MCF 10A (cell line): ENCODE measurements at regions of chr19 and their contacts with region 1.

Region 1: DNA sequence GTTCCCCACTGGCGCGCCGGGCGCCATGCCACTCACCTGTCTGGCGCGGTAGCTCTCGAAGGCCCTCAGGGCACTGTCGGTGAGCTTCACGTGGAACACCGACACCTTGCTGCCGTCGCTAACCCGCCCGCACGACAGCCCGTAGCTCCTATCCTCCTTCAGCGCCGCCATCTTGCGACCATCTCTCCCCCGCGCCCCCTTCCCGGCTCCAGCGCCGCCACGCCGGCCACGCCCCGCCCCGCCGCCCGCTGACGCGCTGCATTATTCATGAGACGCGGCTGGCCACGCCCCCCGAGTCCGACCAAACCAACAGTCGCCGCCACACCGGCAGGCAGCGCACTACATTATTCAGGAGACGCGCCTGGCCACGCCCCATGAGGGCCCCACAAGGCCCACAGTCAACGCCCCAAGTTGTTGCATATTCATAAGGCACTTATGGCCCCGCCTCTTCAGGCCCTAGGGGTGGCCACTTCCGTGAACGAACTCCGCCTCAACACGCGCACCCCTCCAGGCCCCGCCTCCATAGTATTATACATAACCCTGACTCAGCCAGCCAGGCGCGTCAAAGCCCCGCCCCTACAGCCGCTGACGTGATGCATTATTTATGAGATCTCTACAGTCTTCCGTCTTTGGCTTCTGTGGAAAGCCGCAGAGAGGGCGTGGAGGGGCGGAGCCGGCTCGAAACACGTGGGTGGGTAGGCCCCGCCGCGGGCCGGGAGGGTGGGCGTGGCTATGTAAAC is at the start of gene ELL:
- DNase-seq: peak; percentile 100
- H3K4me3 Mint-ChIP-seq: peak within 1 kb of the TSS; percentile 89
- H3K27ac Mint-ChIP-seq: peak within 1 kb of the TSS; percentile 83
- H3K4me1 Mint-ChIP-seq: peaks cover 15% of the 10 kb centered on the region
- H3K27me3 Mint-ChIP-seq: no peaks in the 10 kb centered on the region
- CTCF ChIP-seq: no peak
- total RNA-seq, gene ELL: 20.8 and 22.4 TPM in 2 replicates

Region 2: DNA sequence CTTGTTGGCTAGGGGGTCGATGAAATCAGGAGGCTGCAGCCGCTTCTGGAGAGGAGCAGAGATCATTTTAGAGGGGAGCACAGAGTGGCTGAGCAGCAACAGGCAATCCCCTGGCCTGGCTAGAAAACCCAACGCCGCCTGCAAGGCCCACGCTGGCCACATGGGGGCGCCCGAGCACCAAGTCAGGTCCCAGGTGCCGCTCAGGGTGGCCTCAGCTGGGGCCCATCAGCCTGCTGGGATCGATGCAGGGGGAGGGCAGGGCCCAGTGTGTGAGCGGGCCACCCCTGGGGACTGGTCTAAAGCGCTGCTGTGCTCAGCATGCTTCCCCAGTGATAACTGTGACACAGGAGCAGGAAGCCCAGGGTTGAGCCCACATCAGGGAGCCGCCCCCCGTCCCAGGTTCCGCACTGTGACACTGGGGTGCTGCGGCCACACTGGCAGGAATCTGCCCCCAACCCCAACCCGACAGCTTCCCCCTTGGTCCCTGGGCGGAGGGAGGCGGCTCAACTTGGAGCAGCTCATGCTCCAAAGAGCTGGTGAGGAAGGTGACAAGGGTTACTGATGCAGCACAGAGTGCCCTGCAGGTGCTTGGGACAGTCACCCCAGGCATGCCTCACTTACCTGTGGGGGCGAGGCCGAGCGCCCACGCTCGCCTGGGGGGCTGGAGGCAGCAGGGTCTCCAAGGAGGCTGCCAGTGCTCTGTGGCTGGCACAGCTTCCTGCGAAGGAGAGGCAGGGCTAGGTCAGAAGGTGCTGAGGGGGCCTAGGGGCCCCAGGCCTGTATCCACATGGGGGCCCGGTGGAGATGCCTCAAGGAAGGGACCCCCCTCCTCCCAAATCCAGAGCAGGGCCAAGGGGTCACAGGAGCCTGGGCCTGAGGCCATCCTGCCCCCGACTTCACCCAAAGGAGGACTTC is 70.9 kb before region 1 on chr19:
- CTCF ChIA-PET with region 1: interaction called, 13 read pairs
- POLR2A ChIA-PET with region 1: interaction called, 6 read pairs
- intact Hi-C with region 1: loop called (anchors 5 kb)
- DNase-seq: peak; percentile 78
- H3K4me3 Mint-ChIP-seq: no peak overlapping the region
- H3K27ac Mint-ChIP-seq: peak overlapping the region; percentile 14
- H3K4me1 Mint-ChIP-seq: peaks cover 9% of the 10 kb centered on the region
- H3K27me3 Mint-ChIP-seq: no peaks in the 10 kb centered on the region
- CTCF ChIP-seq: peak; percentile 97

Region 3: DNA sequence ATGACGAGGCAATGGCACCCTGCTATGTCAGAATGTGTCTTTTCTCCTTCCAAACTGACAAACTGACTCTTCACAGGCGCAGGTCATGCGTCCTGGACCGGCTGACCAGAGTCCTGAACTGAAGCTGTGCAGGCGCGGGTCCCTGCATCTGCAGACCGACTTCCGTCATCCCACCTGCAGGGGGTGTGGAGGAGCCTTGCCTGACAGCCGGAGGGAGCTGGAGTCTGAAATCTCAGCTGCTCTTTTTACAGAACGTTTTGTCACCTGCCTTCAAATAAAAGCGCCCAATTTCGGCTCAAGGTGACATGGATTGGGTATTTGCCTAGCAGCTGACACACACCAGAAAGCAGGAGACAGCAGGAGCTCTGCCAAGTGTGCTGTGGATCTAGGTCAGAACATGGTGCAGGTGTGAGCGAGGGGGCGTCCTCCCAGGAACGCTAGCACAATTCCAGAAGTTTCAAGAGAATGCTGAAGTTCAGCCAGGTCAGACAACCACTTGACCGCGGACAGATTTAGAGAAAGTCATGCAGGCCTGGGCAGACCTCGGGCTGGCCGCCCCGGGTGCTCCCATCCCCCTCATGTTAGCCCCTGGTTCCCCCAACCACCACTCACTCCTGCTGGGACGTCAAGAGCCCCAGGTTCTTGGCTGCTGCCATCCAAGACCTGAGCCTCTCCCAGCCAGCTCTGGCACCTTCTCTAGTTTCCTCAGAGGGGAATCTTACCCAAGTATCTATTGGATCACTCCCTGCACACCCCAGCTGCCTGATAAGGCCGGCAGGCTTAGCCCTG is 33.0 kb before region 1 on chr19:
- CTCF ChIA-PET with region 1: interaction called, 7 read pairs
- POLR2A ChIA-PET with region 1: interaction called, 6 read pairs
- intact Hi-C with region 1: loop called (anchors 5 kb)
- DNase-seq: peak; percentile 33
- H3K4me3 Mint-ChIP-seq: no peak overlapping the region
- H3K27ac Mint-ChIP-seq: no peak overlapping the region
- H3K4me1 Mint-ChIP-seq: peaks cover 32% of the 10 kb centered on the region
- H3K27me3 Mint-ChIP-seq: no peaks in the 10 kb centered on the region
- CTCF ChIP-seq: no peak

Region 4: DNA sequence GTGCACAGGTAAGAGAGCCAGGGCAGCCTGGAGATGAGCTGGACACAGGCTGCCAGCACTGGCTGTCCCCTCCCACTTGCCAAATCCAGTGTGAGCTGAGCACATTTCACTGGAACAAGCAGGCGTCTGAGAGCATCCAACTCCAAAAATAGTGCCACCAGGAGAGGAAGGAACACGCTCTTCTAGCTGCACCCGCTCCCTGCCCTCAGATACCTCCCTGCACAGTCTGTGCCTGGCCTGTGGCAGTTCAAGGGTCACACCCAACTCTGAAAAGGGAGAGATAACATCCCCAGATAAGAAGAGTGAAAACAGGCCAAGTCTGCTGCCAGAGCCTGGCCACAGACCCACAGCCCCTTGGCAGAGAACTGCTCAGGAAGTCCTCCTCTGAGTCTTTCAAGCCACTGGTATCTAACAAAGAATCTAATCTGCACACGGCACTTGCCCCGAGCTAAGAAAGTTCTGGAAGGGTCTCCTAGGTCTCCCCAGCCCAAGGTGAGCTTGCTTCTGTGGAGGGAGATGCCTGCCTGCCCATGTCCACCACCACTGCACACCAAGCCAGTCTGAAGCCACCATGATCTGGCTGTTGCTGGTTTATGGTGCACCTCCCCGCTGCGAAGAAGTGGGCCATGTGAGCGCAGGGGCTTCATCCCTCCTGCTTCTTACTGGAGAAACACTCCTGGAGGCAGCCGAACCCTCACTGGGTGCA is 14.9 kb before region 1 on chr19:
- CTCF ChIA-PET with region 1: interaction called, 12 read pairs
- POLR2A ChIA-PET with region 1: interaction called, 5 read pairs
- intact Hi-C with region 1: no loop called
- DNase-seq: no peak
- H3K4me3 Mint-ChIP-seq: no peak overlapping the region
- H3K27ac Mint-ChIP-seq: peak overlapping the region; percentile 74
- H3K4me1 Mint-ChIP-seq: peaks cover 37% of the 10 kb centered on the region
- H3K27me3 Mint-ChIP-seq: no peaks in the 10 kb centered on the region
- CTCF ChIP-seq: no peak

Region 5: DNA sequence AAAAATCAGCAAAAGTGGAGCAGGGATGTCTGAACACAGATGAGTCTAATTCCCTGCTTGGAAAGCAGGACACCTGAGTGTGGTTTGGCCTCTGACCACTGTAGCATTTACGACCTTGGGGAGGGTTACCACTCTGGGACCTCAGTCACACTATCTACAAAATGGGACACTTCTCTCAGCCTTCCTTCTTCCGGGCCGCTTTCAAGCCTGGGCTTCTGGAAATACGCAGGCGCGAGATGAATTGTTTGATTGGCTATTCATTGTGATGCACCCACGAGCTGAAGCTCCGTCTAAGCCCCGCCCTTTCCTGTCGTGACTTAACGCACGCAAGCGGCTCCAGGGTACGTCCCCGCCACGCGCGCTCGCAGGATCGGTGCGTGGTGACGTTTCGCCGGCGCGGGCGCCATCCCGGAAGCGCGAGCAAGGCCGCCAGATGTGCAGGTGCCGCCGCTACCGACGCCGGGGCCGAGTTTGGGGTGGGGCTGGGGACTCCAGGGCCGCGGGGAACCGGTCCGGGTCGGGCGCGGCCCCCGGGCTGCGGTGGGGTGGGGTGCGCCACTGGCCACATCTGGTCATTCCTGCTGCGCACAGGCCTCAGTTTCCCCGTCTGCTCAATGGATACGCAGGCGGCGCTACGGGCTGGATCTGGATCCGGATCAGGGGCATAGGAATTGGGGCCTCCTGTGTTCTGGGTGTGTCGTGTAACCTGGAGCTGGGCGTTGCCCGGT is 35.6 kb after region 1 on chr19 and contains the start of gene KXD1:
- CTCF ChIA-PET with region 1: interaction called, 6 read pairs
- POLR2A ChIA-PET with region 1: interaction called, 62 read pairs
- intact Hi-C with region 1: loop called (anchors 1 kb)
- DNase-seq: peak; percentile 99
- H3K4me3 Mint-ChIP-seq: peak within 1 kb of the TSS; percentile 74
- H3K27ac Mint-ChIP-seq: peak within 1 kb of the TSS; percentile 86
- H3K4me1 Mint-ChIP-seq: peaks cover 11% of the 10 kb centered on the region
- H3K27me3 Mint-ChIP-seq: no peaks in the 10 kb centered on the region
- CTCF ChIP-seq: no peak
- total RNA-seq, gene KXD1: 120 and 126 TPM in 2 replicates

Region 6: DNA sequence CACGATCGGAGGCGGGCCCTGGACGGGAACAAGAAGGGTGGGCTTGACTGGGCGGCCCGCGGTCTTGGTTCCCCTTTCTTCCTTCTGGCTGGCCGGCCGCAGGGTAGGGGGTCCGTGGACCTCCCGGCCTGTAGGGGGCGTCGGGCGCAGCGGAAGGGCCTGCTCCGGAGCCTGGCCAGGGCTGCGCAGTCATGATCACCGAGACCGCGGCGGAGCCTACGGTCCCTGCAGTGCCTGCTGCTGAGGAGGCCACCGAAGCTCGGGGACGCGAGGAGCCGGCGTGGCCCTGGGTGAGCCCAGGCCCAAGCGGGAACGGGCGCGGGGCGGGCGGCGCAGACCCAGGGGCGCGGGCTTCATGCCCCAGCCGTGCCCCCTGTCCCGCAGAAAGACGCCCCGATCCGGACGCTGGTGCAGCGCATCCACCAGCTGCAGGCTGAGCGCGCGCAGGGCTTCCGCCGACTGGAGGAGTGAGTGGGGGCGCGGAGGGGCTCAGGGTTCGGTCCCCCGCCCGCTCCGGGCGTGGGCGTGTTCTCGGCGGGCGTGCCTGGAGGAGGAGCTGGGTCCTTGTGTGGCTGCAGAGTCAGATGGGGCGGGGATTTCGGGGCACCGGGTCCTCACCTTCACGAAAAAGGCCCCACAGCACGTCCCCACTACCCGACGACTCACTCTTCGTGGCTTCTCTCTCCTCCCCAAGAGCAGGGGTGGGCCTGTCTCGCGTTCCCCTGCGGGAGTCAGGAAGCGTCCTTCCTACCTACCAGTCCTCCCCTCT is 66.7 kb after region 1 on chr19 and contains the start of gene REX1BD:
- CTCF ChIA-PET with region 1: interaction called, 10 read pairs
- POLR2A ChIA-PET with region 1: interaction called, 26 read pairs
- intact Hi-C with region 1: loop called (anchors 1 kb)
- DNase-seq: peak; percentile 72
- H3K4me3 Mint-ChIP-seq: peak within 1 kb of the TSS; percentile 88
- H3K27ac Mint-ChIP-seq: peak within 1 kb of the TSS; percentile 90
- H3K4me1 Mint-ChIP-seq: peaks cover 11% of the 10 kb centered on the region
- H3K27me3 Mint-ChIP-seq: no peaks in the 10 kb centered on the region
- CTCF ChIP-seq: peak; percentile 75
- total RNA-seq, gene REX1BD: 29.6 and 49.3 TPM in 2 replicates